Right ventricle myocardium inferior (tissue), 1 donor: ENCODE measurements at regions of chr18 and their contacts with region 1.

Region 1: DNA sequence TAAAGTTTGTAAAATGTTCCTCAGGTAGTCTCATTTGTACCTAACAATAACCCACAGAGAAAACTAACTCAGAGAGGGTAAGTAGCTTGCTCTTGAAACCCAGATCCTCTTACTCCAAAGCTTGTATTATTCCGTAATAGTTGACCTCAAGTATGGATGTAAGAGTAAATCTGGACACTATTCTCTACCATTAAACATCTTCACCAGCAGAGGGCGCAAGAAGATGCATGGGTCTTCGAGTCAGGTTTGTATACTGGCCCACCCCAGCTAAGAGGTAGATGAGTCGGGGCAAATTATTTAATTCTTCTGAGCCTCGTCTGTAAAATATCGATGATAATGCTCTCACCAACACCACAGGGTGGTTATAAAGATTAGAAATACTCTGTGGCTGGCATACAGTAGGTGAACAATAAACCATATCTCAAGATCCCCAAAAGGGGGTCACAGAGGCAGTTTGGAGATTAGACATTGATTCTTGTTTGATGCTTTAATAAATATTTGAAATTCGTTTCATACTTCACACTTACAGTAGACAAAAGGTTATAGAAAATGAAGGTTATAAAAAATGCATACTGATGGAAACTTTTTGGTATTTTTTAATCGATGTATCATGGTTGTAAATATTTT is 3.5 kb upstream of the CABLES1 start:
- DNase-seq: no peak
- ATAC-seq: peak; percentile 56

Region 2: GRCh38 chr18:23143016-23143814 is 11.4 kb after region 1 on chr18:
- intact Hi-C with region 1: no loop called
- DNase-seq: no peak
- ATAC-seq: peak; percentile 72

Region 3: DNA sequence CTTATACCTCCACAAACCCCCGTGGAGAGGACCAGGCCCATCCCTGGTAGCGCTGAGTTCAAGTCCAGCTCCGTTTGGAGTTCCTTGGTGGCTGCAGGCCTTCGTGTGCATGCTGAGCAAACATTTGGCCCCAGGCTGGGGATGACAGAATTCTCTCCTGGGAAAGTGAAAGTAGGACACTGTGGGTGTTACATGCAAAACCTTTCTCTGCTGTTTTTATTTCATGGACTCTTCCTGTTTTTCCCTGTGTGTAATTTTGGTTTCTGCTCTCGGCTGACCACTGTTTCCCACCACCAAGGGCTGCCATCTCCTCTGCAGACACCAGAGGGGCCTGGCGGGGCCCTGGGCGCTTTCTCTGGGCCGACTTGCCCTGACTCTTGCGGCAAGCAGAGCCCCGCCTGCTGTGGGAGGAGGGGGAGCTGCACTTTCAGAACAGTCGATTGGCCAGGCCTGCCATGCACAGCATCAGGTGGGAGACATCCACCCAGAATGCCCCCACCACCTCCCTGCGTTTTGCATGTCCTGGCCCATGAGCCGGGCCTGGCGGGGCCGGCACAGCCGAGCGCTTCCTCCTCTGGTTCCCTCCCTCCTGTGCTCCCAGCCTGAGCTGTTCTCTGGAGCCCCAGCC is 105.8 kb after region 1 on chr18:
- intact Hi-C with region 1: loop called (anchors 5 kb)
- DNase-seq: peak; percentile 75
- ATAC-seq: peak; percentile 79

Region 4: GRCh38 chr18:23276451-23276850 is 144.6 kb after region 1 on chr18:
- intact Hi-C with region 1: loop called (anchors 5 kb)
- DNase-seq: no peak
- ATAC-seq: peak; percentile 93

Region 5: DNA sequence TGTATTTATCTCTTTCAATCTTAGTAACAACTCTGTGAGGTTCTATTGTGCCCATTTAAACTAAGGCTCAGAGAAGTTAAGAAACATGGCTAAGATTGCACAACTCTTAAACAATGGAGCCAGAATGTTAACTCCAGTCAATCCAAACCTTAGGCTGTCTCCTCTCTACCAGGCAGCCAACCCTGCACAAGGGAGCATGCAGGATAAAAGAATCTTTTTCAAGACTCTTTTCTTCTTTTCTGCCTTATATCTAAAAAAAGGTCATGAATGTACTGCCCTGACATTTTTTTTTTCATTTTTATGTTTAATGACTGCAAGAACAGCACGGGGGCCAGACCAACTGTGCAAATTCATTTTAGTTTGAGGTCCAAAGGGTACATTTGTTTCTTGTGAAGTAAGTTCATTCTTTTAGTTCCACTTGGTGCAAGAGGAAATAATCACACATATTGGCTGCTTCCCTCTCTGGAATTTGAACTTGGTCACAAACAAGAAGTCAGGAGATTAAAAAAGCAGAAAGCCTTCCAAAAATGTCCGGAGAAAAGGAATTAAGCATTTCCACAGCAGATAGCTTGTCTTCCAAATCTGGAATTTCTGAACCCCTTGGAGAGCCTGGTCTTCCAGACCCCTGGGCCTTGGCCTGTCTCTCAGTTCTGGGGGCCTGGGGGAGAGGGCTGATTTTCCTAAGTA is 225.3 kb after region 1 on chr18:
- intact Hi-C with region 1: loop called (anchors 1 kb)
- DNase-seq: no peak
- ATAC-seq: peak; percentile 33

Region 6: DNA sequence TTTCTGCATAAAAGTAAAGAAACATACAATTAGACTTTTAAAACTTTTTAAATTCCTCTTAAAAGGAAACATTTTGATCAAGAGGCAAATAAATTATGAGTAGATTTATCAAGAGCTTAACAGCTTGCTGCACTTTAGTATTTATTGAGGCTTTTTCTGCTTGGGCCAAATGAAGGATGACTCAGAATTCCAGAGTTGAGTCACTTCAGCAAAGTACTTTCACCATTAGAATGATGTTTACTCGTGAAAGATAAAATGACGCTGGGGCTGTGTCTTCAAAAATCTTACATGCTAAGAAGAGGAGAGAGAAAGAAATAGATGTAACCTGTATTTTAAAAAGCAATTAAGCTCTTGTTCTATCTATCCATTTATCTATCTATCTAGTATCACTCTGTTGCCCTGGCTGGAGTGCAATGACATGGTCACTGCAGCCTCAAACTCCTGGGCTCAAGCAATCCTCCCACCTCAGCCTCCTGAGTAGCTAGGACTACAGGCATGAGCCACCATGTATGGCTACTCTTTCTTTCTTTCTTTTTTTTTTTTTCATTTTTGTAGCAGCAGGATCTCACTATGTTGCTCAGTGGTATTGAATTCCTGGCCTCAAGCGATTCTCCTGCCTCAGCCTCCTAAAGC is 246.0 kb after region 1 on chr18:
- intact Hi-C with region 1: loop called (anchors 2 kb)
- DNase-seq: no peak
- ATAC-seq: peak; percentile 64